Naive thymus-derived CD4-positive, alpha-beta T cell (primary cell): ENCODE measurements at regions of chr22 and their contacts with region 1.

Region 1: GRCh38 chr22:32528984-32529982 is 54.7 kb downstream of the FBXO7 start:
- DNase-seq: peak; percentile 15 to 63 (median 46)
- ATAC-seq: peak; percentile 76
- H3K4me3 ChIP-seq: no peak overlapping the region
- H3K4me3 Mint-ChIP-seq: no peak overlapping the region
- H3K27ac ChIP-seq: no peak overlapping the region
- H3K27ac Mint-ChIP-seq: no peak overlapping the region
- H3K4me1 ChIP-seq: no peaks in the 10 kb centered on the region
- H3K4me1 Mint-ChIP-seq: peaks cover 0 to 8% (median 0%) of the 10 kb centered on the region in 7 donors
- H3K27me3 ChIP-seq: no peaks in the 10 kb centered on the region
- H3K27me3 Mint-ChIP-seq: peaks cover 0 to 17% (median 8%) of the 10 kb centered on the region in 5 donors

Region 2: GRCh38 chr22:32311551-32312071 is 217.7 kb before region 1 on chr22:
- CTCF ChIA-PET with region 1: no interaction called
- POLR2A ChIA-PET with region 1: no interaction called
- intact Hi-C with region 1: no loop called
- DNase-seq: no peak
- ATAC-seq: no peak
- H3K4me3 ChIP-seq: no peak overlapping the region
- H3K4me3 Mint-ChIP-seq: no peak overlapping the region
- H3K27ac ChIP-seq: no peak overlapping the region
- H3K27ac Mint-ChIP-seq: no peak overlapping the region
- H3K4me1 ChIP-seq: no peaks in the 10 kb centered on the region
- H3K4me1 Mint-ChIP-seq: no peaks in the 10 kb centered on the region
- H3K27me3 ChIP-seq: no peaks in the 10 kb centered on the region
- H3K27me3 Mint-ChIP-seq: peaks cover 18 to 43% (median 23%) of the 10 kb centered on the region in 5 donors

Region 3: DNA sequence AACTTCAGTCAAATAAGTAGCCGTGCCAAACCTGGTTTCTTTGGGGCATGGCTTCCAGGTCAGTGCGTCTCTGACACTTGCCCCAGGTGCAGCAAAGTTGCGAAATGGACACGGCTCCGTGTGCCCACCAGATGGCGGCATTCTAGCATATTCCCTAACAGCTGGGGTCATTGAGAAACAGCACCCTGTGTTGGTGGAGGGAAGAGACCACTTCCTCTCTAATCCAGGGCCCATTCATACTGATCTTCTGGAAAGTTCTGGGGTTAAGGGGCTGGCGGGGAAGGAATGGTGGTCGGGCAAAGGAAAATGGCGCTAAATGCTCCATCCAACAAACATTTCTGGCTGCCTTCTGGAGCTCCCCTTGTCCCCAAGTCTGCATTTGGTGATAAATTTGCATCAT is 131.0 kb after region 1 on chr22:
- CTCF ChIA-PET with region 1: no interaction called
- POLR2A ChIA-PET with region 1: no interaction called
- intact Hi-C with region 1: loop called in 1 of 2 experiments (anchors 1 kb)
- DNase-seq: peak; percentile 16 to 62 (median 46)
- ATAC-seq: peak; percentile 54
- H3K4me3 ChIP-seq: no peak overlapping the region
- H3K4me3 Mint-ChIP-seq: no peak overlapping the region
- H3K27ac ChIP-seq: no peak overlapping the region
- H3K27ac Mint-ChIP-seq: no peak overlapping the region
- H3K4me1 ChIP-seq: no peaks in the 10 kb centered on the region
- H3K4me1 Mint-ChIP-seq: peaks cover 0 to 5% (median 0%) of the 10 kb centered on the region in 7 donors
- H3K27me3 ChIP-seq: no peaks in the 10 kb centered on the region
- H3K27me3 Mint-ChIP-seq: peaks cover 0 to 15% (median 6%) of the 10 kb centered on the region in 5 donors

Region 4: GRCh38 chr22:32796865-32797573 is 267.7 kb after region 1 on chr22:
- CTCF ChIA-PET with region 1: interaction called, 11 read pairs
- POLR2A ChIA-PET with region 1: no interaction called
- intact Hi-C with region 1: no loop called
- DNase-seq: peak; percentile 32 to 63 (median 50)
- ATAC-seq: peak; percentile 81
- H3K4me3 ChIP-seq: no peak overlapping the region
- H3K4me3 Mint-ChIP-seq: peak overlapping the region in 2 of 10 donors; percentile 2 to 17
- H3K27ac ChIP-seq: no peak overlapping the region
- H3K27ac Mint-ChIP-seq: no peak overlapping the region
- H3K4me1 ChIP-seq: no peaks in the 10 kb centered on the region
- H3K4me1 Mint-ChIP-seq: peaks cover 0 to 6% (median 5%) of the 10 kb centered on the region in 7 donors
- H3K27me3 ChIP-seq: no peaks in the 10 kb centered on the region
- H3K27me3 Mint-ChIP-seq: peaks cover 33 to 57% (median 41%) of the 10 kb centered on the region in 5 donors

Region 5: DNA sequence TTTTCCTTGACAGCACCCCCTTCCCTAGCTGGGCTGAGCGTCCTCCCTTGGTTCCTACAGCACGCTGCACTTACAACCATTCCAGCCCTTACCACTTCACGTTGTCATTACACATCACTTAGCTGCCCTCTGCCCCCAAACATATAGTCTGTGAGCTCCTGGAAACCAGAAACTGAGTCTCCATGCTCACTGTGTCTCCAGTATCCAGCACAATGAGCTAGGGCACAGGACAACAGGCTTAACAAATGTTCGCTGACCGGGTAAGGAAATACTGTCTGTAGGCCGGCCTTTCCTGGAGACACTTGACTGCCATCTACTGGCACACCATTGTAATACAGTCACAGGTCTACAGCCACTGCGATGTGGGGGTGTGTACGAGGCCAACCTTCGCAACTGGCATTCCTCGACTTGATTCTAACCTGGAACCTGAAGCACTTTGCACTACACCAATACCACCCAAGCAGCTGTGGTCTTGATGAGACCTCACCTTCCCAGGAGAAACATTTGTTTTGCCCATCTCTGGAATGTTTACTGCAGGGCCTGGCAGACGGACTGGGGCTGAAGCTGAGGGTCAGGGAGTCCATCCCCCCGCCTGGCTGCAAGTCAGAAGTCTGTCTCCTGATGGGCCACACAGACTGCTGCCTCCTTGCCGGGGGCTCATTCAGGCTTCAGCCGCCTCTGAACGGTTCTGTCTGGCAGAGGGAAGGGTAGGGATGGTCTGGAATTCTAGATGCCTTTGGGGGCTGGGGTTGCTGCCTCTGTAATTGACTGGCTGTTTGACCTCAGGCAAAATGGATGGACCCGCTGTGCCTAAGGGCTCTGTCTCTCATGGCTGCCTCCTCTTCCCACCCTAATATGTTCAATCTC is 456.8 kb after region 1 on chr22:
- CTCF ChIA-PET with region 1: interaction called, 4 read pairs
- POLR2A ChIA-PET with region 1: no interaction called
- intact Hi-C with region 1: loop called in 1 of 2 experiments (anchors 5 kb)
- DNase-seq: peak in 7 of 9 donors; percentile 5 to 40 (median 29)
- ATAC-seq: peak; percentile 68
- H3K4me3 ChIP-seq: no peak overlapping the region
- H3K4me3 Mint-ChIP-seq: no peak overlapping the region
- H3K27ac ChIP-seq: no peak overlapping the region
- H3K27ac Mint-ChIP-seq: no peak overlapping the region
- H3K4me1 ChIP-seq: no peaks in the 10 kb centered on the region
- H3K4me1 Mint-ChIP-seq: peaks cover 0 to 4% (median 0%) of the 10 kb centered on the region in 7 donors
- H3K27me3 ChIP-seq: no peaks in the 10 kb centered on the region
- H3K27me3 Mint-ChIP-seq: peaks cover 0 to 8% (median 0%) of the 10 kb centered on the region in 5 donors

Region 6: GRCh38 chr22:33000342-33001280 is 471.3 kb after region 1 on chr22:
- CTCF ChIA-PET with region 1: interaction called, 3 read pairs
- POLR2A ChIA-PET with region 1: no interaction called
- intact Hi-C with region 1: loop called in 1 of 2 experiments (anchors 5 kb)
- DNase-seq: peak in 6 of 9 donors; percentile 2 to 29 (median 20)
- ATAC-seq: no peak
- H3K4me3 ChIP-seq: no peak overlapping the region
- H3K4me3 Mint-ChIP-seq: no peak overlapping the region
- H3K27ac ChIP-seq: no peak overlapping the region
- H3K27ac Mint-ChIP-seq: no peak overlapping the region
- H3K4me1 ChIP-seq: no peaks in the 10 kb centered on the region
- H3K4me1 Mint-ChIP-seq: peaks cover 0 to 4% (median 0%) of the 10 kb centered on the region in 7 donors
- H3K27me3 ChIP-seq: no peaks in the 10 kb centered on the region
- H3K27me3 Mint-ChIP-seq: peaks cover 0 to 8% (median 7%) of the 10 kb centered on the region in 5 donors